PC-9 (cell line): ENCODE measurements at regions of chr18 and their contacts with region 1.

Region 1: DNA sequence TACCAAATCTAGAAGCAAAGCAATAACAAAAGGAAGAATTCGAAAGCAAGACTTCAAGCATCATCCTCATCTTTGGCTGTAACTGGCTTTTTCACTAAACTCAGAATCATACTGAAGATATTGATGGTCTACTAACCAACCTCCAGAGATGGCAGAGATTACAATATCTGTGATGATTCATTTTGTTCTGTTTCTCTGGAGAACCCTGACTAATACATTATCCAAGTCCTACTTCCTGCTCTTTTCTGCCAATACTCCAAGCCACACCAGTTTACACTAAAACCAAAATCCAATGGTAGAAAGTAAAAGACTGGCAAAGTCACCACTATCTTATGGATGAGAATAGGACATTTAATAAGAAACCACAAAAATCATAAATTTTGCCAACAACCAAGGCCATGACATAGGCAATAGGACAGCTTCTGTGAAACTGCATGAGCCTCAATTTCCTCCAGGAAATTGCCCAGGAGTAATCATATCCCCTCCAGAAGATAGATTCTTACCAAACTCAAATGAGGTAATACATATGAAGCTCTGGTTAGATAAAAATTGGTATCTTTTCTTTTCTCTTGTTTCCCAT is 159.8 kb downstream of the METTL4 start:
- DNase-seq: peak; percentile 12 to 75
- H3K4me3 ChIP-seq: no peak overlapping the region; the same call in 1 of the 2 replicates
- H3K27ac ChIP-seq: peak overlapping the region; percentile 70
- H3K4me1 ChIP-seq: peaks cover 34% of the 10 kb centered on the region
- H3K27me3 ChIP-seq: no peaks in the 10 kb centered on the region
- CTCF ChIP-seq: no peak

Region 2: DNA sequence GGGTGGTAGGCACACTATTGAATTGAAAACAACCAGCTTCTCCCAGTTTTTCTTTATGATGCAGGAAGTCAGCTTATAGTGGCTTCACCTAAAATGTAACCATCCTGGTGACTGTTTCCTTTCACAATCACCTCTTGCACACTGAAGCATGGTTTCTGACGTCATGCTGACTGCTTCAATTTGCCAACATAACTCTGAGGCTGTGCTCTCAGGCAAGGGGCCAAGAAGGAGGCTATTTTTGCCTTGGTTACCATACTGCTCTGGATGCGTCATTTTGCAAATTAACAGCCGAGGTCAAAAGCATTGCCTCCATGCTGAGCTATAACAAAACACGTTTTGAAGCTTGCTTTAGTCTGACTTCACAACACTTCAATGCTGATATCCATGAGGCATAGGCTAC is 238.0 kb before region 1 on chr18:
- CTCF ChIA-PET with region 1: interaction called, 3 read pairs
- POLR2A ChIA-PET with region 1: no interaction called
- intact Hi-C with region 1: loop called (anchors 2 kb)
- DNase-seq: peak; percentile 53 to 73
- H3K4me3 ChIP-seq: no peak overlapping the region
- H3K27ac ChIP-seq: no peak overlapping the region
- H3K4me1 ChIP-seq: peaks cover 26% of the 10 kb centered on the region
- H3K27me3 ChIP-seq: no peaks in the 10 kb centered on the region
- CTCF ChIP-seq: no peak

Region 3: GRCh38 chr18:2274613-2275012 is 136.9 kb before region 1 on chr18:
- CTCF ChIA-PET with region 1: no interaction called
- POLR2A ChIA-PET with region 1: no interaction called
- intact Hi-C with region 1: no loop called
- DNase-seq: no peak
- H3K4me3 ChIP-seq: no peak overlapping the region
- H3K27ac ChIP-seq: no peak overlapping the region
- H3K4me1 ChIP-seq: no peaks in the 10 kb centered on the region
- H3K27me3 ChIP-seq: no peaks in the 10 kb centered on the region
- CTCF ChIP-seq: no peak

Region 4: DNA sequence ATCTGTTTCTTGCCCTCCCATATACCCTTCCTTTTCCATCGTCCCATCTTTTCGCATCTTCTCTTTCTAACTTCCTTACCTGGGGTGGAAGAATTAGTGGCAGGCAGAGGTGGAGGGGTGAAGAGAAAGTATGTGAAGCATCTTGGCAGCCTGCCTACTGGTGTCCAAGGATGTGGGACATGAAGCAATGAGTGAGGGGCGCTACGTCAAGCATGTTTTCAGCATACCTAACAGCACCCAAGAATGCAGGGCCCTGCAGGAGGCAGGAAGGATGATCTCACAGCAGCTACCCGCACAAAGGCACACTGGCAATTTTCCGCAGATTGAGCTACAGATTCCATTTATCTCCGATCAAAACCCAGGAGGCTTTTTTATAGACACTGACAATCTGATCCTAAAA is 117.7 kb after region 1 on chr18:
- CTCF ChIA-PET with region 1: no interaction called
- POLR2A ChIA-PET with region 1: no interaction called
- intact Hi-C with region 1: loop called (anchors 1 kb)
- DNase-seq: peak in 1 of 2 experiments; percentile 77
- H3K4me3 ChIP-seq: no peak overlapping the region
- H3K27ac ChIP-seq: no peak overlapping the region
- H3K4me1 ChIP-seq: no peaks in the 10 kb centered on the region
- H3K27me3 ChIP-seq: no peaks in the 10 kb centered on the region
- CTCF ChIP-seq: no peak